BJ (cell line): ENCODE measurements at regions of chr6 and their contacts with region 1.

Region 1: GRCh38 chr6:31058128-31058894 is 48.0 kb downstream of the MUC22 start:
- DNase-seq: peak; percentile 66
- H3K4me3 ChIP-seq: no peak overlapping the region
- H3K27me3 ChIP-seq: peaks cover 4% of the 10 kb centered on the region
- CTCF ChIP-seq: peak; percentile 63

Region 2: DNA sequence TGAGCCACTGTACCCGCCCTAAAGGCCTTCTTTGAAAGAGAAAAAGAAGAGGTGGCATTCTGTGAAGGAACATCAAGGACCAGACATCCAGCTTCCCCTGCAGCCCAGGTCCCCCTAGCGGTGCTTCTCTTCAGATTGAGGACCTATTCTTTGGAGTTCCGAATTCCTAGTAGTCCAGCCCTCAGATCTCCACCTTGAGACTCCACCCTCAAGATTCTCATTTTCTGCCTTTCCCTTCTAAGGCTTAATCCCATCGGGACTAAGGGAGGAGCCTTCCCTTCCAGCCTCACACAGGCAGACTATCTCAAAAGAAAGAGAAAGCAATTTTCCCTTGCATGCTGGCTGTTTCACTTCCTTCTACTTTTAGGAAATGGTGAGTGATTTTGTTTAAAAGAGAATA is 15.5 kb before region 1 on chr6:
- CTCF ChIA-PET with region 1: interaction called, 12 read pairs
- POLR2A ChIA-PET with region 1: no interaction called
- DNase-seq: no peak
- H3K4me3 ChIP-seq: no peak overlapping the region
- H3K27me3 ChIP-seq: peaks cover 3% of the 10 kb centered on the region
- CTCF ChIP-seq: peak; percentile 71